ENCODE measurements at regions of chr13 and their contacts with region 1.

Region 1: GRCh38 chr13:33349986-33350826 is 64.7 kb upstream of the STARD13 start:
- DNase-seq: peak; percentile 61 to 68
- ATAC-seq: peak; percentile 66 to 93 (median 78)
- H3K4me3 ChIP-seq: peak overlapping the region; percentile 59 to 96 (median 82)
- H3K27ac ChIP-seq: peak overlapping the region; percentile 61 to 96 (median 88)
- H3K4me1 ChIP-seq: peaks cover 0 to 61% (median 27%) of the 10 kb centered on the region in 9 donors
- H3K27me3 ChIP-seq: peaks cover 0 to 11% (median 0%) of the 10 kb centered on the region in 7 donors
- CTCF ChIP-seq: no peak

Region 2: DNA sequence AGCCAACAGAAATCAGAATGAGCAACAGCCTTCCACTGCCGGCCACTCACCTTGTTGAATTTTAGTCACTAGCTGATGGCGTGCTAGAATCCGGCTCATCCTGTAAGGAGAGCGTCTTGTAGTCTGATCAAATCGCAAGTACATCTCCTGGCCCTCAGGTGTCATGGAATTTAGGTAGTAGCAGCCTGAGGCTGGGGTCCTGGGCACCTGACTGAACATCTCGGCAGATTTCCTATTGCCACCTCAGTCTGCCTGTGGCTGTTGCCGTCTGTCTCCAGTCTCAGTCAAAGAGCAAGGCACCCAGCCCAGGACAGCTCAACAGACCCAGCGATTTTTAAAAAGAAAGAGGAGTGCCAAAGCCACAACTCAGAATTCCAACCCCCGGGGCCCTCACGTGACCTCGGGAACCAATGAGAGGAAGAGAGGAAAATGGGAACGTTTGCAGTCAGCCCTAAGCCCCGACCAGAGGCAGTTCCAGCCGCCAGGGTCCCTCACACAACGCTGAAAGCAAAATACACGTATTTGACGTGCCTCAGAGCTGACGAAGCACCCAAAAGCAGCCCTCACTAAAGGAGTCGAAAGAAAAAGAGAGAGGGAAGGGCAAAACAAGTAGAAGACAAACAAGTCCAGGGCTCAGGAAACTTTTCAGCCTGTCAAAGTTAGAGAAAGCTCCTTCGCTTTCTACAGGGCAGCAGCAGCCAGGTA is 64.6 kb before region 1 on chr13 and contains the start of gene STARD13:
- intact Hi-C with region 1: loop called in 3 of 10 experiments (anchors 5 to 10 kb)
- DNase-seq: peak; percentile 89 to 97
- ATAC-seq: peak; percentile 95 to 97 (median 96)
- H3K4me3 ChIP-seq: peak within 1 kb of the TSS; percentile 59 to 84 (median 72)
- H3K27ac ChIP-seq: peak within 1 kb of the TSS; percentile 84 to 98 (median 95)
- H3K4me1 ChIP-seq: peaks cover 5 to 60% (median 47%) of the 10 kb centered on the region in 9 donors
- H3K27me3 ChIP-seq: no peaks in the 10 kb centered on the region
- CTCF ChIP-seq: peak; percentile 15 to 69 (median 40)
- total RNA-seq, gene STARD13: 18.2 to 38.3 (median 28.5) TPM

Region 3: DNA sequence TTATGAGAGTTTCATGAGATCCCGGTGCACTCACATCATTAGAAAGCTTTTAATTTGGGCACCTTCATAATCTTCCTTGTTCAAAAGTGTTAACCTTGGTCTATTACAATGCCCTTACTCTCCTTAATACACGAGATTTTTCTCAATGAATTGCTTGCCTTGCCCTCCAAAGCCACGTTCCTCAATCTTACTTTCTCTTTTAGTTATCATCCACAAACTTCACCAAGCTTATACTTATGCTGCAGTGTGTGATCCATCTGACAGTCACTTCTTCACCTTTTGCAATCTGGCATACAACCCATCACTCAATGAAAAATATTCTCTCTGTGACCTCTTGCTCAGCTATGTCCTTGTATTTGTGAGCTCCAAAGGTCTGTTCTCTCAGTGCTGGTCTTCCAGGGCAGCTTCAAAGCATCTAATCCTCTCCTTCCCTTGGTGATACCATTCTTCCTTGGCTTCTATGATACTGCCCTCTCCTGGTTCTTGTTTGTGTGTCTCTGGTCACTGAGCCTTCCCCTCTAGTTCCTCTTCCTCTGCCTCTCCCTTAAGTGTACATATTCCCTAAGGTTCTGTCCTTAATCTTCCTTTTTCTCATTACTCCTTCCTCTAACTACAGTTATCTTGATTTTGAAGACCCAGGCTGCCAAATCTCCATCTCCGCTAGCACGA is 137.5 kb after region 1 on chr13:
- intact Hi-C with region 1: loop called in 1 of 10 experiments (anchors 10 kb)
- DNase-seq: peak in 1 of 2 donors; percentile 19
- ATAC-seq: peak; percentile 71 to 93 (median 83)
- H3K4me3 ChIP-seq: peak overlapping the region in 5 of 10 donors; percentile 18 to 34 (median 25)
- H3K27ac ChIP-seq: peak overlapping the region in 7 of 10 donors; percentile 3 to 46 (median 20)
- H3K4me1 ChIP-seq: peaks cover 0 to 20% (median 5%) of the 10 kb centered on the region in 9 donors
- H3K27me3 ChIP-seq: no peaks in the 10 kb centered on the region
- CTCF ChIP-seq: peak in 7 of 9 donors; percentile 34 to 61 (median 50)

Region 4: GRCh38 chr13:33940898-33941297 is 590.7 kb after region 1 on chr13:
- intact Hi-C with region 1: loop called in 1 of 10 experiments (anchors 5 kb)
- DNase-seq: no peak
- ATAC-seq: no peak
- H3K4me3 ChIP-seq: no peak overlapping the region
- H3K27ac ChIP-seq: no peak overlapping the region
- H3K4me1 ChIP-seq: peaks cover 0 to 8% (median 0%) of the 10 kb centered on the region in 9 donors
- H3K27me3 ChIP-seq: no peaks in the 10 kb centered on the region
- CTCF ChIP-seq: no peak

Measured in heart right ventricle (tissue), 16 donors.